Sigmoid colon (tissue), 7 donors: ENCODE measurements at regions of chr3 and their contacts with region 1.

Region 1: DNA sequence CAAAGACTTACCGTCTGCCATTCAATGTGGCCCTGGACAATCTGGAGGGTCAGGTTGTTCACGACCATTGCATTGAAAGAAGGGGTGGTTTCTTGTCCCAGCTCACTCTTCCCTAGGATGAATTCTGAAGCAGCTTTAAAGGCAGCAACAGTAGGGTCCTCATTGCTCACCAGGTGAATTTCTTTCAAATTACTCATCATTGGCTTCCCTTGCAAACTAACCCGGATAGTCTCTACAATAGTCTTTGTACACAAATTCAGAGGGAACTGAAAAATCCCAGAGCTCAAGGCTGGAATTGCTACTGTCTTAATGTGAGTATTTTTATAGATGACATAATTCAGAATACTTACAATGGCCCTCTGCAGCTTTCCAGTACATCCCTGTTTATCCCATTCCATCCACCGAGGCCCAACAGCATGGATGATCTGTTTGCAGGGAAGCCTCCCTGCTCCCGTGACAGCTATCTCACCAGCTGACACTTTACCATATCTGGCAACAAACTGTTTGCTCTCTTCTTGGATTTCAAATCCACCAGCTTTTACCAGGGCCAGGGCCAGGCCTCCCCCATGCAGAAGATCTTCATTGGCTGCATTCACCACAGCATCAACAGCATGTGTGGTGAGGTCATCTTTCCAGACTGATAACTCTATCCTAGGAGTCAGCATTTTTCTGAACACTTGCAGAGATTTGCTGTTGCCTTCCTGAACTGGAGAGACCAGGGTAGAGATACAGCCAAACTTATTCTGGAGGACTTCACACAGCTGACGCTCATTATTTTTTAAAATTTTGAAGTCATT is 8.6 kb downstream of the PARP9 start:
- DNase-seq: no peak
- H3K4me3 ChIP-seq: no peak overlapping the region
- H3K27ac ChIP-seq: peak overlapping the region in 3 of 4 donors; percentile 43 to 75 (median 67)
- H3K4me1 ChIP-seq: peaks cover 0 to 32% (median 15%) of the 10 kb centered on the region in 4 donors
- H3K27me3 ChIP-seq: no peaks in the 10 kb centered on the region
- CTCF ChIP-seq: no peak
- EP300 ChIP-seq: peak in 1 of 4 donors; percentile 64
- POLR2A ChIP-seq: no peak

Region 2: GRCh38 chr3:122392868-122393844 is 162.3 kb before region 1 on chr3:
- intact Hi-C with region 1: loop called (anchors 5 kb)
- DNase-seq: no peak
- H3K4me3 ChIP-seq: no peak overlapping the region
- H3K27ac ChIP-seq: peak overlapping the region in 3 of 4 donors; percentile 1 to 46 (median 8)
- H3K4me1 ChIP-seq: peaks cover 0 to 17% (median 7%) of the 10 kb centered on the region in 4 donors
- H3K27me3 ChIP-seq: no peaks in the 10 kb centered on the region
- CTCF ChIP-seq: peak; percentile 32 to 69 (median 52)
- EP300 ChIP-seq: no peak
- POLR2A ChIP-seq: no peak

Region 3: DNA sequence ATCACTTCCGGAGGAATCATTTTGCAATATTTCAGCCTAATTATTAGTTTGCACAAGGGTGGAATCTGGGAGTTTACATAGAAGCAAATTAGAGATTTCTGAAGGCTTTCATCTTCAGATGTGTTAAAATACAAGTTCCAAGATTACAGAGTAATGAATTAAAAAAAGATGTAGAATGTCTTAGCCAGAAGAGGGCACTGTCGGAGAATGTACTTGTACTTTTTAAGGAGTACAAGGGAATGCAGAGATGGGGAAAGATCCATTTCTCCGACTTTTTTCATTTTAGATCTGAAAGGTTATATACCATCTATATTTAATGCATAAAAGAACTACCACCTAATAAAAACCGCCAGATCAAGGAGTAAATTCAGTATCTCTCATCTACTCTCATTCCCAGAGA is 96.5 kb before region 1 on chr3:
- intact Hi-C with region 1: loop called (anchors 10 kb)
- DNase-seq: no peak
- H3K4me3 ChIP-seq: no peak overlapping the region
- H3K27ac ChIP-seq: peak overlapping the region in 1 of 4 donors; percentile 11
- H3K4me1 ChIP-seq: no peaks in the 10 kb centered on the region
- H3K27me3 ChIP-seq: no peaks in the 10 kb centered on the region
- CTCF ChIP-seq: peak in 1 of 4 experiments; percentile 18
- EP300 ChIP-seq: no peak
- POLR2A ChIP-seq: no peak

Region 4: GRCh38 chr3:122810734-122811133 is 255.3 kb after region 1 on chr3:
- intact Hi-C with region 1: no loop called
- DNase-seq: no peak
- H3K4me3 ChIP-seq: no peak overlapping the region
- H3K27ac ChIP-seq: no peak overlapping the region
- H3K4me1 ChIP-seq: no peaks in the 10 kb centered on the region
- H3K27me3 ChIP-seq: no peaks in the 10 kb centered on the region
- CTCF ChIP-seq: no peak
- EP300 ChIP-seq: no peak
- POLR2A ChIP-seq: no peak